Panc1 (cell line): ENCODE measurements at regions of chr18 and their contacts with region 1.

Region 1: DNA sequence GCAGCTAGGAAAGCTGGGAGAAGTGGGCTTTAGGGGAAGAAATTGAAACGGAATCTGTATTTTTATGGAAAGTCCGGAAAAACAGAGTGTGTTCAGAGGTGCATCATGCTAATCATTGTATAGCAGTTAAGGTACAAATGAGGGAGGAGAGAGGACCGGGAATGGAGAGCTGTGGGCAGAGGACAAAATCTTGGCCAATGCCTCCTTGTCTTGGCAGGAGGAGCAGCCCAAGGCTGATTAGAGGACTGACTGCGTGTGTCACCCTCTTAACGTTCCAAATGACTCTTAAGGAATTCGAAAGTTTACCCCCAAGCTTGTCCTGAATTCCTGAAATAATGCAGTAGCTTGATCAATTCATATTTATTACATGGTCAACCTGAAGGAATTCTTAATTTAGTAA is 81.0 kb downstream of the ZNF236 start:
- DNase-seq: no peak
- ATAC-seq: no peak
- H3K4me3 ChIP-seq: no peak overlapping the region
- H3K27ac ChIP-seq: no peak overlapping the region
- H3K4me1 ChIP-seq: no peaks in the 10 kb centered on the region
- H3K27me3 ChIP-seq: no peaks in the 10 kb centered on the region
- CTCF ChIP-seq: no peak

Region 2: GRCh38 chr18:76943542-76944339 is 40.4 kb after region 1 on chr18:
- CTCF ChIA-PET with region 1: no interaction called
- POLR2A ChIA-PET with region 1: no interaction called
- in situ Hi-C with region 1: loop called (anchors 5 kb)
- intact Hi-C with region 1: no loop called
- DNase-seq: no peak
- ATAC-seq: no peak
- H3K4me3 ChIP-seq: no peak overlapping the region
- H3K27ac ChIP-seq: no peak overlapping the region
- H3K4me1 ChIP-seq: no peaks in the 10 kb centered on the region
- H3K27me3 ChIP-seq: no peaks in the 10 kb centered on the region
- CTCF ChIP-seq: no peak